Activated T-helper 1 cell treated with anti-CD3 and anti-CD28 coated beads, Interleukin-12 subunit alpha, Interleukin-12 subunit beta, Interleukin-2, Interleukin-4 antibody, amounts not matched to agents 30 ng/mL and 10 ng/mL and 1 ng/mL, durations not matched to agents 14 hours and 24 hours and 36 hours (primary cell): ENCODE measurements at regions of chr17 and their contacts with region 1.

Region 1: DNA sequence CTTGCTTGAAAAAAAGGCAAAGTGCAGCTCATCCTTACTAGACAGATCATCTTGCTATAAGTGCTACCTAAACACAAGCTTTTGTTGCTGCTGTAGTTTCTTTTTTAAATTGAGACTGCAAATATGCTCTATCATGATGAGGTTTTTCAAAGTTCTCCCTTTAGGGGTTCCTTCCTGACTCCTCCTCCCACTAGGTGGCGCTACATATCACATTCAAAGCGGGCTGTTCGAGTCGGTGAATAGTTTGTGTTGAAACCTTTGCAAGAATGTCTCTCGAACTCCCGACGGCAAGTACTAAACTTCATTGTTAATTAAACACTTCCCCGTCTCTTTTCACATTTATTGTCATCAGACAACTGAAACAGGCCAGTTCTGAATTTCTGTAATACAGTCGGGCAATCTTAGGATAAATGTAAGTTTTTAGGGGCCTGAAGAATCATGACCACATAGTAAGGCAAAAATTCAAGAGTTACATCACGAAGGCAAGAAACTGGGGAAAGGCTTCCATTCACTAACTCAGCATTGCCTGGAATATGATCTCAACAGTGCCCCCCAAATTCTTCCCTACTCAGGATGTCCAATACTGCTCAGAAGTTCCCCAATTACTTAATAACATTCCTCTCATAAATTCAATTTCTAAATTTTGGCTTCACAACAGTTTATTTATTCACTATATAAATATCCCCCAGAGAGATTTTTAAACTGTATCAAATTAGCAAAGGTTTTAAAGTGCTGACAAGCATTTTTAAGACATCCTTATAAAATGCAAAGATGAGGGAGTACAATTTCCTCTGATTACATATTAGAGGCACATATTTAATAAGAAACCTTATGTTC is 6.7 kb downstream of the HS3ST3A1 start:
- DNase-seq: peak; percentile 68
- H3K4me3 Mint-ChIP-seq: no peak overlapping the region
- H3K27ac Mint-ChIP-seq: no peak overlapping the region
- H3K4me1 Mint-ChIP-seq: peaks cover 7% of the 10 kb centered on the region
- H3K27me3 Mint-ChIP-seq: peaks cover 44% of the 10 kb centered on the region

Region 2: GRCh38 chr17:13337864-13338371 is 257.1 kb before region 1 on chr17:
- intact Hi-C with region 1: loop called (anchors 10 kb)
- DNase-seq: no peak
- H3K4me3 Mint-ChIP-seq: no peak overlapping the region
- H3K27ac Mint-ChIP-seq: no peak overlapping the region
- H3K4me1 Mint-ChIP-seq: peaks cover 5% of the 10 kb centered on the region
- H3K27me3 Mint-ChIP-seq: peaks cover 9% of the 10 kb centered on the region

Region 3: GRCh38 chr17:14203388-14203787 is 608.4 kb after region 1 on chr17:
- intact Hi-C with region 1: loop called (anchors 2 kb)
- DNase-seq: peak; percentile 32
- H3K4me3 Mint-ChIP-seq: peak overlapping the region; percentile 24
- H3K27ac Mint-ChIP-seq: peak overlapping the region; percentile 85
- H3K4me1 Mint-ChIP-seq: peaks cover 90% of the 10 kb centered on the region
- H3K27me3 Mint-ChIP-seq: no peaks in the 10 kb centered on the region

Region 4: GRCh38 chr17:14553855-14554254 is 958.9 kb after region 1 on chr17:
- intact Hi-C with region 1: loop called (anchors 5 kb)
- DNase-seq: no peak
- H3K4me3 Mint-ChIP-seq: no peak overlapping the region
- H3K27ac Mint-ChIP-seq: no peak overlapping the region
- H3K4me1 Mint-ChIP-seq: no peaks in the 10 kb centered on the region
- H3K27me3 Mint-ChIP-seq: peaks cover 3% of the 10 kb centered on the region

Region 5: DNA sequence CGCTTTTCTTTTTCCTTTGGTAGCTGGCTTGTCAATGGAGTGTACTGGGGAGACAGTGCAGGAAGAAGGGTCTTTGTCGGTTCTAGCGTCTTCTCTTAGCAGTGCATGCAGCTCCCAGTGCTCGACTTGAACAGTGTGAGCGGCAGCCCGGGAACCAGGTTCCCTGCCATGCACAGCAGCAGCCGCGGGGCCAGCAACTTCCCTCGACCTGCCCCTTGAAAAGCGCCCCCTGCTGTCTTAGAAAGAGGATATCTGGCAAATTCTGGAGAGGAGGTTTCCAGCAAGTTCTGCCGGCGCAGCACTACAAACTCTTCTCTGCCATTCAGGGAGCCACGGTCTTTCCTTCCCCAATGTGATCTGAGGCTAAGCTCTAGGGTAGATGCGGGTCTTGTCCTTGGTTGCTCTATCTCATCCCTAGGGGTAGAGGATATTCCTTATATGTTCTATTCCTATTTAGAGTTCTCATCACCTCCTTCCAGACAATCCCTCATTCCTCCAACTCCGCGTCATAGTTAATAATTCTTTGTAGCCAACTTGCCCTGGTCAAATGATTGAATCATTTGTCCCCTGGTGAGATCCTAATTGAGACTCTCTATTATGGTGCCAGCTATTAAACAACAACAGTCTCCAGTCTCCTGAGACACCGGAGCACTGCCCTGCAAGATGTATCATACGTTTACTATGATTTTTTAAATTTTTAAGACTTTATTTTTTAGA is 1218.8 kb after region 1 on chr17:
- intact Hi-C with region 1: loop called (anchors 1 kb)
- DNase-seq: no peak
- H3K4me3 Mint-ChIP-seq: no peak overlapping the region
- H3K27ac Mint-ChIP-seq: no peak overlapping the region
- H3K4me1 Mint-ChIP-seq: peaks cover 5% of the 10 kb centered on the region
- H3K27me3 Mint-ChIP-seq: peaks cover 4% of the 10 kb centered on the region

Region 6: DNA sequence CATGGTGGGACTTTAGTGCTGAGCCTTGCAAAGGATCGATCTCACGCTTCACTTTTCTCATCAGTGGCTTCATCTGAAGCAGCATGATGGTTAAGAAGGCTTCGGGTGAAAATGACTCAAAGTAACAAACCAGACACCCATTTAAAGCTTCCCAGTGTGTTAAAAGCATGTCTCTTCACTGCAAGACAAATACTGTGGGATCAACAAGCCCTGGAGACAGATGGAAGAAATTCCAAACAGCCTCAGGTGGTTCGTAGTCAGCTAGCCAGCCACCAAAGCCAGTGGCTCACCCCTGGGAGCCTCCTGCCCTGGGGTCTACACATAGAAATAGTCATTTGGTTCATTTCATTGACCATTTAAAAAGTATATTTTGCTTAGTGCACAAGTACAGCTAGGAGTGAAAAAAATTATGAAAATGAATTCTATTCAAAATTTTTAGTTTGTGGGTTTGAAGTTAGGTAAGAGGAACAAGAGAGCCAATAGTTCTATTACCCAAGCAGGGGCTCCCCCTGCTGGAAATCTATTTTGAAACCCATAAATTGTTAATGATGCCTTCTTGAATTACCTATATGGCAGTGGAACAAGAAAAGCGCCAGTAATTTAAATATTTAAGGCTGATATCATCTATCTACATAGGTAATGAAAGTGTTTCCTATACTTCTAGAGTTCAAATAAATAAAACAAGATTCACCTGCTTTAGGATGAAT is 1618.6 kb after region 1 on chr17:
- intact Hi-C with region 1: loop called (anchors 10 kb)
- DNase-seq: no peak
- H3K4me3 Mint-ChIP-seq: no peak overlapping the region
- H3K27ac Mint-ChIP-seq: no peak overlapping the region
- H3K4me1 Mint-ChIP-seq: no peaks in the 10 kb centered on the region
- H3K27me3 Mint-ChIP-seq: peaks cover 2% of the 10 kb centered on the region